Sciatic nerve (tissue), 2 donors: ENCODE measurements at regions of chr3 and their contacts with region 1.

Region 1: GRCh38 chr3:86605166-86605565 is 385.8 kb downstream of the VGLL3 start:
- DNase-seq: no peak
- ATAC-seq: no peak

Region 2: DNA sequence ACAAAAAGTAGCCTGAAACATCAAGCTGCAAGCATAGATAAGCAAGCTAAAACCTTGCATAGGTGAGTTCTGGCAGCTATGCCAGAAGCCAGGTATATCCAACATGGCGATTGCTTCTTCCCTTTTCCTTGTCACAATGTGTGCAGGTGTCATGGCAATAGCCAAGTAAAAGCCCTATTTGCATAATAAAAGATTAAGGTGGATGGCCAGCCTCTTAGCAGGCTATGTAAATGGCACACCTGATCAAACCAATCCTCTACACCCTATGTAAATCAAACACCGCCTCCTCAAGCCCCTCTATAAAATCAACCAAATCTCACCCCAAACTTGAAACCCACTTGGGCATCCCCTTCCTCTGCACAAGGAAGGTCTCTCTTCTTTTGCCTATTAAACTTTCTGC is 19.0 kb after region 1 on chr3:
- intact Hi-C with region 1: loop called (anchors 1 kb)
- DNase-seq: no peak
- ATAC-seq: no peak

Region 3: DNA sequence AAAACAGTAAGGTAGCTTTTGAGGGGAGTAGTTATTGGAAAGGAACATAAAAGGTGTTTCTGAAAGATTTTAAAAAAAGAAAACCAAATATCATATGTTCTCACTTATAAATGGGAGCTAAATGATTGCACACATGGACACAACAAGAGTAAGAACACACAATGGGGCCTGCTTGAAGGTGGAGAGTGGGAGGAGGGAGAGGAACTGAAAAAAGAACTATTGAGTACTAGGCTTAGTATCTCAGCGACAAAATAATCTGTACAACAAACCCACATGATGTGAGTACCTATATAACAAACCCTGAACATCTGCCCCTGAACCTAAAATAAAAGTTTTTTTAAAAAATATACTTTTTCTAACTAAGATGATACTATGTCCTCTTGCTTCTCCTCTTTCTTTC is 1315.4 kb after region 1 on chr3:
- intact Hi-C with region 1: no loop called
- DNase-seq: no peak
- ATAC-seq: no peak